CD8-positive, alpha-beta T cell (primary cell): ENCODE measurements at regions of chr6 and their contacts with region 1.

Region 1: GRCh38 chr6:97282726-97283617 is at the start of gene MMS22L:
- DNase-seq: peak; percentile 80 to 97 (median 91)
- ATAC-seq: peak; percentile 98
- H3K4me3 ChIP-seq: peak within 1 kb of the TSS; percentile 61 to 94
- H3K4me3 Mint-ChIP-seq: peak within 1 kb of the TSS; percentile 95
- H3K27ac ChIP-seq: peak within 1 kb of the TSS; percentile 53 to 58
- H3K27ac Mint-ChIP-seq: peak within 1 kb of the TSS; percentile 89
- H3K4me1 ChIP-seq: peaks cover 8% of the 10 kb centered on the region
- H3K4me1 Mint-ChIP-seq: peaks cover 33% of the 10 kb centered on the region
- H3K27me3 ChIP-seq: no peaks in the 10 kb centered on the region
- H3K27me3 Mint-ChIP-seq: no peaks in the 10 kb centered on the region
- CTCF ChIP-seq: no peak
- total RNA-seq, gene MMS22L: 3.1 to 3.3 TPM

Region 2: DNA sequence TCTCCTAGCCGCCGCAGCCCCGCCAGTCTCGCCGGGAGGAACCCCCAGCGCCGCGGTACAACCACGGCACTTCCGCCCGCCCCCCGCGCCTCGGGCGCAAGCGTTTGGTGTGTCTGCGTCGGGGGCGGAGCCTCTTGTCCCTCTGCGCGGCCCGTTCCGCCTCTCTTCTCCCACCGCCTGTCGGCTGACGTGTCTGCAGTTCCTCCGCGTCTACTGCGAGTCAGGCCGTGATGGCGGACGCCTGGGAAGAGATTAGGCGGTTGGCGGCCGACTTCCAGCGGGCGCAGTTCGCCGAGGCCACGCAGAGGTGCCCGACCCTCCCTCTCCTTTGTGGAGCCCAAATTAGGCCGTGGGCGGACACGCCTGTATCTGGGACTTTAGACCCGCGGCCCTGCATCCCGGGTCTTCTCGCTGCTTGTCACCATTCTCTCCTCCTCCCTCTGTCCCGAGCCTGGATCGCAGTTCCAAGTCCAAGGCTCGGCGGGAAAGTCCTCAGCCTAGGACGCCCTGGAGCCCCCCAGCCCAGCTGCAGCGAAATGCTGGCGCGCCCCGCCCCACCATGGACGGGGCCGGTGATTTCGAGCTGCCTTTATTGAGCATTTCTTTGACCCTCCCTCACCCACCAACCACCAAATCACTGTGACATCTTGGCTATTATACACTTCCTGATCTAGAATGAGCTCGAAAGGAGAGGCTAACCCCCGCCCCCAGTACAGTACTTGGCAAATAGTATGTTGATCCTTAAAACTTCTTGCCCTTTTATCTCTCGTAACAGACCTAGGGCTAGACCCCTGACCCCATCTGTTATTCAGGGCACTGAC is 761.1 kb before region 1 on chr6 and contains the start of gene UFL1:
- CTCF ChIA-PET with region 1: no interaction called
- POLR2A ChIA-PET with region 1: no interaction called
- intact Hi-C with region 1: loop called (anchors 2 to 5 kb)
- DNase-seq: peak; percentile 92 to 98 (median 96)
- ATAC-seq: peak; percentile 89
- H3K4me3 ChIP-seq: peak within 1 kb of the TSS; percentile 87 to 98
- H3K4me3 Mint-ChIP-seq: peak within 1 kb of the TSS; percentile 100
- H3K27ac ChIP-seq: peak within 1 kb of the TSS; percentile 98 to 99
- H3K27ac Mint-ChIP-seq: peak within 1 kb of the TSS; percentile 100
- H3K4me1 ChIP-seq: peaks cover 20% of the 10 kb centered on the region
- H3K4me1 Mint-ChIP-seq: peaks cover 37% of the 10 kb centered on the region
- H3K27me3 ChIP-seq: no peaks in the 10 kb centered on the region
- H3K27me3 Mint-ChIP-seq: no peaks in the 10 kb centered on the region
- CTCF ChIP-seq: no peak
- total RNA-seq, gene UFL1: 18.0 to 20.3 TPM

Region 3: GRCh38 chr6:96743496-96743895 is 539.5 kb before region 1 on chr6:
- CTCF ChIA-PET with region 1: no interaction called
- POLR2A ChIA-PET with region 1: no interaction called
- intact Hi-C with region 1: no loop called
- DNase-seq: no peak
- ATAC-seq: no peak
- H3K4me3 ChIP-seq: no peak overlapping the region
- H3K4me3 Mint-ChIP-seq: no peak overlapping the region
- H3K27ac ChIP-seq: no peak overlapping the region
- H3K27ac Mint-ChIP-seq: no peak overlapping the region
- H3K4me1 ChIP-seq: no peaks in the 10 kb centered on the region
- H3K4me1 Mint-ChIP-seq: no peaks in the 10 kb centered on the region
- H3K27me3 ChIP-seq: peaks cover 0 to 2% of the 10 kb centered on the region in 2 experiments
- H3K27me3 Mint-ChIP-seq: peaks cover 4% of the 10 kb centered on the region
- CTCF ChIP-seq: no peak

Region 4: GRCh38 chr6:96923871-96924493 is 359.0 kb before region 1 on chr6:
- CTCF ChIA-PET with region 1: interaction called, 4 read pairs
- POLR2A ChIA-PET with region 1: no interaction called
- intact Hi-C with region 1: loop called (anchors 1 to 2 kb)
- DNase-seq: peak in 3 of 9 experiments; percentile 1 to 83 (median 75)
- ATAC-seq: no peak
- H3K4me3 ChIP-seq: peak overlapping the region; percentile 64 to 76
- H3K4me3 Mint-ChIP-seq: peak overlapping the region; percentile 96
- H3K27ac ChIP-seq: peak overlapping the region; percentile 92 to 96
- H3K27ac Mint-ChIP-seq: peak overlapping the region; percentile 98
- H3K4me1 ChIP-seq: peaks cover 32% of the 10 kb centered on the region
- H3K4me1 Mint-ChIP-seq: peaks cover 32% of the 10 kb centered on the region
- H3K27me3 ChIP-seq: no peaks in the 10 kb centered on the region
- H3K27me3 Mint-ChIP-seq: no peaks in the 10 kb centered on the region
- CTCF ChIP-seq: no peak

Region 5: GRCh38 chr6:98845211-98846020 is 1562.4 kb after region 1 on chr6:
- CTCF ChIA-PET with region 1: no interaction called
- POLR2A ChIA-PET with region 1: no interaction called
- intact Hi-C with region 1: loop called in 1 of 2 experiments (anchors 10 kb)
- DNase-seq: peak in 8 of 9 experiments; percentile 43 to 74 (median 66)
- ATAC-seq: peak; percentile 79
- H3K4me3 ChIP-seq: peak overlapping the region in 1 of 2 experiments; percentile 3
- H3K4me3 Mint-ChIP-seq: peak overlapping the region; percentile 72
- H3K27ac ChIP-seq: no peak overlapping the region
- H3K27ac Mint-ChIP-seq: no peak overlapping the region
- H3K4me1 ChIP-seq: peaks cover 24% of the 10 kb centered on the region
- H3K4me1 Mint-ChIP-seq: peaks cover 27% of the 10 kb centered on the region
- H3K27me3 ChIP-seq: peaks cover 65% of the 10 kb centered on the region in 2 experiments
- H3K27me3 Mint-ChIP-seq: peaks cover 72% of the 10 kb centered on the region
- CTCF ChIP-seq: peak; percentile 79